Heart left ventricle (tissue), 16 donors: ENCODE measurements at regions of chr17 and their contacts with region 1.

Region 1: GRCh38 chr17:27601069-27601975 is 29.7 kb upstream of the LGALS9 start:
- DNase-seq: peak; percentile 72 to 82 (median 79)
- ATAC-seq: peak in 3 of 4 donors; percentile 54 to 57 (median 55)
- H3K4me3 ChIP-seq: no peak overlapping the region
- H3K27ac ChIP-seq: no peak overlapping the region
- H3K4me1 ChIP-seq: peaks cover 0 to 24% (median 7%) of the 10 kb centered on the region in 12 donors
- H3K27me3 ChIP-seq: no peaks in the 10 kb centered on the region
- CTCF ChIP-seq: peak; percentile 91 to 96 (median 94)
- POLR2A ChIP-seq: no peak

Region 2: DNA sequence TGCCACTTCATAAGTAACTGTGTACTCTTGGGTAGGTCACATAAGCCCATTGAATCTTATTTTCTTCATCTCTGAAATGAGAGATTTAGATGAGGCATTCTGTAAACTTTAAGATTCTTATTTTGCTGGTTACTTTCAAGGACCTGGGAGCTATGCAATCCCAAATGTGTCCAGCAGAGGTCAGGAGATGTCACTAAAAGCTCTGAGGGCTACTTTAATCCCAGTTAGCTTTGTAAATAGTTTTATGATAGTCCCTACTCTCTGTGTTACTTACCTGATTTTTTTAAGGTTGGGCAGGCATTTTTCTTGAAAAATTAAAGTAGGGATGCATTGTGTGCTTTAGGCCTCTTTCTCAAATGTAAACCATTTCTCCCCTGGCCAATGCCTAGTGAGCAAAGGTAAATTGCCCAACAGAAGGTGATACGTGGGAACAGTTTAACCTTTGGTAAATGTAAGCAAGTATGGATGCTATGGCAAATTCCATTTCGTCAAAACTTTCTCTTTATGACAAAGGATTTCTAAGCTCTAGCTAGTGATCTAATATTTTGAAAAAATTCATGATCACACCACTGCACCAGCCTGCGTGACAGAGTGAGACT is 364.5 kb before region 1 on chr17:
- intact Hi-C with region 1: loop called (anchors 1 to 5 kb)
- DNase-seq: peak in 4 of 5 donors; percentile 60 to 81 (median 63)
- ATAC-seq: peak; percentile 41 to 81 (median 67)
- H3K4me3 ChIP-seq: no peak overlapping the region
- H3K27ac ChIP-seq: no peak overlapping the region
- H3K4me1 ChIP-seq: peaks cover 0 to 59% (median 0%) of the 10 kb centered on the region in 12 donors
- H3K27me3 ChIP-seq: no peaks in the 10 kb centered on the region
- CTCF ChIP-seq: peak; percentile 88 to 98 (median 94)
- POLR2A ChIP-seq: no peak

Region 3: GRCh38 chr17:27332485-27333409 is 268.6 kb before region 1 on chr17:
- intact Hi-C with region 1: loop called in 1 of 10 experiments (anchors 2 kb)
- DNase-seq: peak; percentile 98 to 100 (median 99)
- ATAC-seq: peak; percentile 95 to 97 (median 96)
- H3K4me3 ChIP-seq: peak overlapping the region in 11 of 12 donors; percentile 29 to 69 (median 57)
- H3K27ac ChIP-seq: peak overlapping the region; percentile 92 to 99 (median 96)
- H3K4me1 ChIP-seq: peaks cover 0 to 35% (median 19%) of the 10 kb centered on the region in 12 donors
- H3K27me3 ChIP-seq: no peaks in the 10 kb centered on the region
- CTCF ChIP-seq: peak; percentile 82 to 99 (median 93)
- POLR2A ChIP-seq: peak in 1 of 2 donors; percentile 48

Region 4: GRCh38 chr17:27494192-27495091 is 106.9 kb before region 1 on chr17:
- intact Hi-C with region 1: loop called in 3 of 10 experiments (anchors 1 to 10 kb)
- DNase-seq: peak; percentile 21 to 79 (median 66)
- ATAC-seq: peak; percentile 41 to 89 (median 78)
- H3K4me3 ChIP-seq: peak overlapping the region in 2 of 12 donors; percentile 19 to 24
- H3K27ac ChIP-seq: peak overlapping the region in 5 of 12 donors; percentile 3 to 76 (median 29)
- H3K4me1 ChIP-seq: peaks cover 0 to 37% (median 14%) of the 10 kb centered on the region in 12 donors
- H3K27me3 ChIP-seq: no peaks in the 10 kb centered on the region
- CTCF ChIP-seq: peak in 8 of 12 donors; percentile 19 to 49 (median 36)
- POLR2A ChIP-seq: no peak

Region 5: DNA sequence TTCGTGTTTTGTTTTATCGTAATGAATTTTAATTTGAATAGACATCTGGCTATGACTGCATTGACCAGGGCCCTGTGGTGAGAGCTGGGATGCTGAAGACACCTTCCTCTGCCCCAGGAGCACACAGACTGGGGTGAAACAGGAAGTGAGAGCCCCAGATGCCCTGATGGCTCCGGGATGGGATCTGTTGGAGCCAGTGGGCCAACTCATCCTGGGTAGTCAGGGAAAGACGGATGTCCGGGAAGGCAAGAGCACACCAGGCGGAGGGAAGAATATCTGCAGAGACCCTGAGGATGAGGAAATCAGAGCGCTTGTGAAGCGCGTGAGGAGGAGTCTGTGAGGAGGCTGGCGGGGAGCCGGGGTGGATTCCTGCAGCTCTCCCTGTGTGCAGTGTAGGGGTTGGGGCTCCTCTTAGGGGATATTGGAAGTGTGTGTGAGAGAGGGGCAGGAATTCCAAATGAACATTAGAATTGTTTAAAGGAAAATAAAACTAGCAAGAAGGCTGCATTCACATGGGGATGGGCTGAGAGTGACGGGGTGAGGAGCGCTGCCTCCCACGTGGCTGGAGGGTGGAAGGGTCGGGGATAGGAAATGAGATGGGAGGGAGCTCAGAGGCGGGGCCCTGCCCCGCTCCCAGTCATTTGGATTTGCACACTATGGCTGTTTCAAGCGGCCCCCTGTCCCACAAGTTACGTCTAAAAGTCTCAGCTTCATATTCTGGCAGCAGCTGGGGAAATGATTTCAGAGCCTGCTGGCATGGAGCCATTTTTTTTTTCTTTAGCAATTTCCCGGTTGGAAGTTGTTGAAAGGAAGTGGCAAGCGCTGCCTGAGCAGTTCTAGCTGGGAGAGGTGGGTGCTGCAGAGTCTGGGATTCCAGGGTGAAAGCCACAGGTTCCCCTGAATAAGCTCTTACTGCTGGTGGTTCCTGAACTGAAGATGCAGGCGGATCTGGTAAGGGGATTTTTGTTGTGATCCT is 41.5 kb before region 1 on chr17:
- intact Hi-C with region 1: loop called in 1 of 10 experiments (anchors 2 kb)
- DNase-seq: peak; percentile 77 to 90 (median 83)
- ATAC-seq: peak; percentile 82 to 96 (median 94)
- H3K4me3 ChIP-seq: peak overlapping the region in 11 of 12 donors; percentile 12 to 52 (median 38)
- H3K27ac ChIP-seq: peak overlapping the region in 11 of 12 donors; percentile 62 to 88 (median 80)
- H3K4me1 ChIP-seq: peaks cover 5 to 64% (median 25%) of the 10 kb centered on the region in 12 donors
- H3K27me3 ChIP-seq: no peaks in the 10 kb centered on the region
- CTCF ChIP-seq: peak in 5 of 12 donors; percentile 8 to 26 (median 19)
- POLR2A ChIP-seq: no peak

Region 6: GRCh38 chr17:27586203-27586721 is 15.1 kb before region 1 on chr17:
- intact Hi-C with region 1: no loop called
- DNase-seq: peak in 1 of 5 donors; percentile 27
- ATAC-seq: peak in 2 of 4 donors; percentile 29 to 54
- H3K4me3 ChIP-seq: no peak overlapping the region
- H3K27ac ChIP-seq: peak overlapping the region in 1 of 12 donors; percentile 17
- H3K4me1 ChIP-seq: no peaks in the 10 kb centered on the region
- H3K27me3 ChIP-seq: no peaks in the 10 kb centered on the region
- CTCF ChIP-seq: no peak
- POLR2A ChIP-seq: no peak

Region 7: GRCh38 chr17:27631411-27631760 is 30.1 kb after region 1 on chr17:
- intact Hi-C with region 1: no loop called
- DNase-seq: no peak
- ATAC-seq: peak in 2 of 4 donors; percentile 16 to 18
- H3K4me3 ChIP-seq: peak overlapping the region in 11 of 12 donors; percentile 4 to 67 (median 55)
- H3K27ac ChIP-seq: peak overlapping the region in 11 of 12 donors; percentile 53 to 87 (median 73)
- H3K4me1 ChIP-seq: peaks cover 5 to 54% (median 25%) of the 10 kb centered on the region in 12 donors
- H3K27me3 ChIP-seq: no peaks in the 10 kb centered on the region
- CTCF ChIP-seq: no peak
- POLR2A ChIP-seq: no peak

Region 8: DNA sequence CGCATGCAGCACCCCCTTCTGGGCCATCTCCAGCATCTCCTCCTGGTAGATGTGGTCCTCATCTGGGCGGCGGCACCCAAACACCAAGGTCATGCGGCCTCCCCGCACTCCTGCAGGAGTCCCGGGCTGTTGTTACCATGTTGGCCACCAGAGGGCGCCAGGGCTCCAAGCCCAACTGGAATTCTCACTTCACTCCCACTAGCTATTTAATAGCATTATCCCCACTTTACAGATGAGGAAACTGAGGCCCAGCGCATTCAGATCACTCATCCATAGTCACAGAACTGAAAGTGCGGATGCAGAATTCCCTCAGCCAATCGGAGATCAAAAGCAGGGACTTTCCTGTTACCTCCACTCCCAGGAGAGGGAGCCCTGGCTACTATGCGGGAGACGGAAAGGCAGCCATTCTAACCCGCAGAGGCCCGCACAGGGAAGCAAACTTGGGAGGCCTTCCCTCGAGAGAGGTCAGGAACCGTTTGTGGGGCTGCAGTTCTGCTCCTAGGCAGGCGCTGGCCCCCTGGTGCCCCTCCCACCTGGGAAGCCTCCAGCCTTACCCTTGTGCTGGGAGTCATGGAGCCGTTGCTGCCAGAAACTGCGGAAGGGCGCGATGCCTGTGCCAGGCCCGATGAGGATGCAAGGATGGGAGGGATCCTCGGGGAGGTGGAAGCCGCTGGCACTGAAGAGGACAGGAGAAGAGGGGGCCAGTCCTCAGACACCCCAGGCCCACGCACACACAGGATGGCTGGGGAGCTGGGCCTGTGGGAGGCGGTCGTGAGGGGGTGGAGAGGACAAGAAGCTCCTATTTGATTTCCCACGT is 159.0 kb after region 1 on chr17:
- intact Hi-C with region 1: loop called in 5 of 10 experiments (anchors 2 to 10 kb)
- DNase-seq: peak; percentile 46 to 81 (median 65)
- ATAC-seq: peak in 3 of 4 donors; percentile 52 to 57 (median 55)
- H3K4me3 ChIP-seq: no peak overlapping the region
- H3K27ac ChIP-seq: no peak overlapping the region
- H3K4me1 ChIP-seq: no peaks in the 10 kb centered on the region
- H3K27me3 ChIP-seq: no peaks in the 10 kb centered on the region
- CTCF ChIP-seq: peak; percentile 76 to 95 (median 90)
- POLR2A ChIP-seq: no peak